ENCODE measurements at regions of chrX and their contacts with region 1.

Region 1: GRCh38 chrX:14029425-14030173 is at the start of gene GEMIN8:
- DNase-seq: peak; percentile 72 to 93 (median 87)
- ATAC-seq: peak; percentile 97
- H3K4me3 ChIP-seq: peak within 1 kb of the TSS; percentile 60
- H3K4me3 Mint-ChIP-seq: peak within 1 kb of the TSS; percentile 80 to 100 (median 94)
- H3K27ac ChIP-seq: peak within 1 kb of the TSS; percentile 90
- H3K27ac Mint-ChIP-seq: peak within 1 kb of the TSS; percentile 91 to 100 (median 96)
- H3K4me1 ChIP-seq: peaks cover 19 to 26% of the 10 kb centered on the region in 2 donors
- H3K4me1 Mint-ChIP-seq: peaks cover 9 to 51% (median 41%) of the 10 kb centered on the region in 7 donors
- H3K27me3 ChIP-seq: no peaks in the 10 kb centered on the region
- H3K27me3 Mint-ChIP-seq: peaks cover 0 to 1% (median 0%) of the 10 kb centered on the region in 5 donors
- total RNA-seq, gene GEMIN8: 9.7 to 20.4 (median 11.7) TPM

Region 2: GRCh38 chrX:13254076-13254785 is 775.4 kb before region 1 on chrX:
- CTCF ChIA-PET with region 1: no interaction called
- POLR2A ChIA-PET with region 1: no interaction called
- intact Hi-C with region 1: loop called in 1 of 2 experiments (anchors 10 kb)
- DNase-seq: no peak
- ATAC-seq: no peak
- H3K4me3 ChIP-seq: no peak overlapping the region
- H3K4me3 Mint-ChIP-seq: peak overlapping the region in 1 of 10 donors; percentile 22
- H3K27ac ChIP-seq: no peak overlapping the region
- H3K27ac Mint-ChIP-seq: peak overlapping the region in 1 of 9 donors; percentile 47
- H3K4me1 ChIP-seq: peaks cover 0 to 10% of the 10 kb centered on the region in 2 donors
- H3K4me1 Mint-ChIP-seq: peaks cover 0 to 45% (median 20%) of the 10 kb centered on the region in 7 donors
- H3K27me3 ChIP-seq: no peaks in the 10 kb centered on the region
- H3K27me3 Mint-ChIP-seq: no peaks in the 10 kb centered on the region

Region 3: DNA sequence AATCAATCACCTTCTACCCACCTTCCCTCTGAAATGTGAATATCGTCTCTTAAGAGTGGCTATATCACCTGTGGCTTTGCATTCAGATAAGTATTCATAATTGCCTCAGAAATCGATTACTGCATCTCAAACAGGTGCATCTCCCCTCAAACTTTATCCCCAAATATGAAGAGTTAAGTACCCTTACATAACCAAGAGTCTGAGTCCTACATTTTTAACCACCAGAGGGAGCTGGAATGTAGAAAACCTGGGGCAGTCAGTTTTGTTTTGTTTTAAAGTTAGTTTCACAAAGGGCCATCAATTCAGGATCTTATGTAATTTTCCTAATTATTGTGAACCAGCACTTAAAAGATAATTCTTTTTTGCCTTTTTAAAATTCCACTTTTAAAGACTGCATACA is 371.0 kb before region 1 on chrX:
- CTCF ChIA-PET with region 1: interaction called, 6 read pairs
- POLR2A ChIA-PET with region 1: interaction called, 10 read pairs
- intact Hi-C with region 1: loop called (anchors 1 kb)
- DNase-seq: peak in 7 of 9 donors; percentile 36 to 69 (median 63)
- ATAC-seq: peak; percentile 71
- H3K4me3 ChIP-seq: no peak overlapping the region
- H3K4me3 Mint-ChIP-seq: peak overlapping the region in 1 of 10 donors; percentile 12
- H3K27ac ChIP-seq: peak overlapping the region; percentile 56
- H3K27ac Mint-ChIP-seq: peak overlapping the region in 8 of 9 donors; percentile 43 to 88 (median 78)
- H3K4me1 ChIP-seq: peaks cover 9 to 10% of the 10 kb centered on the region in 2 donors
- H3K4me1 Mint-ChIP-seq: peaks cover 0 to 34% (median 23%) of the 10 kb centered on the region in 7 donors
- H3K27me3 ChIP-seq: no peaks in the 10 kb centered on the region
- H3K27me3 Mint-ChIP-seq: no peaks in the 10 kb centered on the region

Region 4: GRCh38 chrX:13750204-13750603 is 279.4 kb before region 1 on chrX:
- CTCF ChIA-PET with region 1: interaction called, 10 read pairs
- POLR2A ChIA-PET with region 1: interaction called, 3 read pairs
- intact Hi-C with region 1: loop called (anchors 1 kb)
- DNase-seq: peak in 7 of 9 donors; percentile 23 to 52 (median 38)
- ATAC-seq: peak; percentile 68
- H3K4me3 ChIP-seq: no peak overlapping the region
- H3K4me3 Mint-ChIP-seq: no peak overlapping the region
- H3K27ac ChIP-seq: no peak overlapping the region
- H3K27ac Mint-ChIP-seq: peak overlapping the region in 5 of 9 donors; percentile 33 to 74 (median 42)
- H3K4me1 ChIP-seq: peaks cover 4 to 7% of the 10 kb centered on the region in 2 donors
- H3K4me1 Mint-ChIP-seq: peaks cover 6 to 32% (median 14%) of the 10 kb centered on the region in 7 donors
- H3K27me3 ChIP-seq: no peaks in the 10 kb centered on the region
- H3K27me3 Mint-ChIP-seq: no peaks in the 10 kb centered on the region

Region 5: DNA sequence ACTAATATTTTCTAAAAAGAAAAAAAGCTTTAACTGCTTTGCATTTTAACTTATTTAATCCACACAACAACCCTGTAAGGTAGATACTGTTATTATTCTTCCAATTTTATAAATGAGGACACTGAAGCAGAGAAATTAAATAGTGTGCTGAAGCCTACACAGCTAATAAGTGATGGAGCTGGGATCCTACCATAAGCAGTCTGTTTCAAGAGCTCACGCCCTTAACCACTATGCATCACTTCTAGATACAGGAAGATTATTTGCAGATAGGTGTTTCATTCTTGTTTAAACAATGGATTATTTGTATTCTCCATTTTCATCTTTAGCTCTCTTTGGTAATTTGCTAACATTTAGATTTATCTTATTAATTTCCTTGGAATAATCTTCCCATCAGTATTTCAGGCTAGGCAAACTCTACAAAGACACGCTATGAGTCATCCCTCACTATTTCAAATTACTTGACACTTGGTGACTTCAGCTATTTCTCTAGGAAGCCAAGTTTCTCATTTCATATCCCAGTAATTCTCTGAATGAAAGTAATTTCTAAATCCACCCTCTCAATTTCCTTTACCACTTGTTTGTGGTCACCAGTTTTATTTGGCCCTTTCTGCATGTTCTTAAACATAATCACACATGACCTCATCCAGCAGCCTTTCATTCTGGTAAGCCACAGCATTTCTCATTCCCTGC is 1173.0 kb after region 1 on chrX:
- CTCF ChIA-PET with region 1: no interaction called
- POLR2A ChIA-PET with region 1: no interaction called
- intact Hi-C with region 1: loop called in 1 of 2 experiments (anchors 2 kb)
- DNase-seq: no peak
- ATAC-seq: no peak
- H3K4me3 ChIP-seq: no peak overlapping the region
- H3K4me3 Mint-ChIP-seq: peak overlapping the region in 1 of 10 donors; percentile 38
- H3K27ac ChIP-seq: no peak overlapping the region
- H3K27ac Mint-ChIP-seq: peak overlapping the region in 2 of 9 donors; percentile 76 to 84
- H3K4me1 ChIP-seq: peaks cover 0 to 14% of the 10 kb centered on the region in 2 donors
- H3K4me1 Mint-ChIP-seq: peaks cover 9 to 47% (median 24%) of the 10 kb centered on the region in 7 donors
- H3K27me3 ChIP-seq: no peaks in the 10 kb centered on the region
- H3K27me3 Mint-ChIP-seq: peaks cover 0 to 7% (median 0%) of the 10 kb centered on the region in 5 donors